ENCODE measurements at regions of chr11 and their contacts with region 1.

Region 1: DNA sequence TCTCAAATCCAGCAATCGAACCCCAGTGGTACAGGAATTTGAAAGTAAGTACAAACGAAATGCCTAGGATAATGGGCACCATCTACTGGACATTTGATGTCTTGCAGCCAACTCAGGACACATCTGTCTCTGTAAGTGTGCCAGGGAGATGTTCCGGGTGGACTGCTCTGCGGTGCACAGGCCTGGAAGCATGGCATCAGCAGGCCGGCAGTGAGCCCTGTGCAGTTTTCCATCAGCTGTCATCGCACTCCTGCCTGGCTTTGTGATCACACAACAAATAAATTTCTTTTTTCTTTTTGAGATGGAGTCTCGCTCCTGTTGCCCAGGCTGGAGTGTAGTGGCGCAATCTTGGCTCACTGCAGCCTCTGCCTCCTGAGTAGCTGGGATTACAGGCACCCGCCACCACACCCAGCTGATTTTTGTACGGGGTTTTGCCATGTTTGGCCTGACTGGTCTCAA is 71.0 kb downstream of the JAM3 start:
- DNase-seq: peak; percentile 64 to 74 (median 66)
- ATAC-seq: peak; percentile 78
- H3K4me3 ChIP-seq: no peak overlapping the region
- H3K27ac ChIP-seq: no peak overlapping the region
- H3K4me1 ChIP-seq: no peaks in the 10 kb centered on the region
- H3K27me3 ChIP-seq: no peaks in the 10 kb centered on the region
- CTCF ChIP-seq: peak; percentile 68 to 88 (median 80)
- POLR2A ChIP-seq: no peak

Region 2: DNA sequence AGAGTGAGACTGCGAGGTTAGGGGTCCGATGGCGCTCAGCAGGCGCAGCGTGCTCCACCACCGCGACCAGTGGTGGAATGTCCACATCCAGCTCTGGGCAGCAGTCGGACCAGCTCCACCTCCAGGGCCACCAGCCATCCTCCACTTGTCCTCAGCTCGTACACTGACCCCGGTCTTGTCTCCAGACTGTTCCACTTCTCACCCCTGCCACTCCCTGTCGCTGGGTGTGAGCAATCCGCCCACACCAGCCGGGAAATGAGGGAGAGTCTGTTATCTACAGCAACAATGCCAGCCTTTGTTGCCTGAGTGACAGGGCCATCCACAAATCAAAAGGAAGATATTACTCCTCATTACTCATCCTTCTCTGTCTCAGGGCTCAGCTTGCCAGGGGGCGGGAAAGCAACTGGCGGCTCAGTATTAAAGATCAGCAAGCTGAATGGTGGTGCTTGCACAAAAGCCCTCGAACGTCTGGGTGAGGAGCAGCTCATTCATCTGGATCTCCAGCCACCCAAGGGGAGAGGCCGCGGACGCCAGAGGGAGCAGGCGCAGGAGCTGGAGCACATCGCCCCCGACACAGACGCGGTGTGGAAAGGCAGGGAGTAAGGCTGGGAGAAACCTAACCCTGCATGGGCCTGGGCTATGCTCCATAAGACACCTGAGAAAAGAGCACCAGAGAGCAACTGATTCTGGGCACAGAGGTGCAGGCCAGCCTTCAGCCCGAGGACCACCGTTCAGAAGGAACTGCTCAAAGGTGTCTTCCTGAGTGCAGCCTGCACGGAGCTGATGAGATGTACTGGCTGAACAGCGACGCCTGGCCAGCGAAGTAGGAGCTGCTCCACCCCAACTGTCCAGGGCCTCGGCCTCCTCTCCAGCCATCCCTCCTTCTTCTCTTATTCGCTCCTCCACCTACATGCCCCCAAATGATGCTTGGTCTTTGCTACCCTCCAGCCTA is 205.0 kb before region 1 on chr11:
- intact Hi-C with region 1: loop called (anchors 5 kb)
- DNase-seq: no peak
- ATAC-seq: no peak
- H3K4me3 ChIP-seq: no peak overlapping the region
- H3K27ac ChIP-seq: no peak overlapping the region
- H3K4me1 ChIP-seq: no peaks in the 10 kb centered on the region
- H3K27me3 ChIP-seq: no peaks in the 10 kb centered on the region
- CTCF ChIP-seq: no peak
- POLR2A ChIP-seq: no peak

Region 3: DNA sequence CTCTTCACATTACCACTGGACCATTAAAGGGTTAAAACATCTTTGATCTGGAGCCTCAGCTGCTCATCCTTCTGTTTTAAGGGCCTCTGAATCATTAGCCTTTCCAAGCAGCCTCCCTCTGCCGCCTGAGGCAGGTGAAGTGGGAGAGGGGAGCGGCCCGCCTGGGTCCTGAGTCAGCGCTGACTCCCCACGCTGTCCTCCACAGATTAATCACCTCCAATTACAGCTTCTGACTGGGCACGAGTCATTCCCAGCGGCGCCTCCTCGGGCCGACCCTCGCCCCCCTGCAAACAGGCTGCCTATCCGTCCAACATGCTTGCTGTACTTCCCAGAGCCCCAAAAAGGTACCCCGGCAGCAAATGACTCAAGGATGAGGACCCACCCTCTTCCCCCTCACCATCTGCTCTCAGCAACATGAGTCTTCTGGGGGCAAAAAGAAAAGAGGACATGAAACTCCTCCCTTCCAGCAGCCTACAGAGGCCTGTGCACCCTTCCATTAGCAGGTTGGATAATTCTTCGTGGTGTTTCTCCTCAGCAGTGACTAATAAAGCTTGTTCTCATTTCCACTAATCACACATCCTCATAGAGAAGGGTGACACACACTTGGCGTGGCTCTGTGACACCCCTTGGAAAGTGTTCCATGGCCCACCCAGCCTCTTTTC is 115.4 kb before region 1 on chr11:
- intact Hi-C with region 1: no loop called
- DNase-seq: no peak
- ATAC-seq: no peak
- H3K4me3 ChIP-seq: no peak overlapping the region
- H3K27ac ChIP-seq: no peak overlapping the region
- H3K4me1 ChIP-seq: no peaks in the 10 kb centered on the region
- H3K27me3 ChIP-seq: no peaks in the 10 kb centered on the region
- CTCF ChIP-seq: no peak
- POLR2A ChIP-seq: no peak

Region 4: DNA sequence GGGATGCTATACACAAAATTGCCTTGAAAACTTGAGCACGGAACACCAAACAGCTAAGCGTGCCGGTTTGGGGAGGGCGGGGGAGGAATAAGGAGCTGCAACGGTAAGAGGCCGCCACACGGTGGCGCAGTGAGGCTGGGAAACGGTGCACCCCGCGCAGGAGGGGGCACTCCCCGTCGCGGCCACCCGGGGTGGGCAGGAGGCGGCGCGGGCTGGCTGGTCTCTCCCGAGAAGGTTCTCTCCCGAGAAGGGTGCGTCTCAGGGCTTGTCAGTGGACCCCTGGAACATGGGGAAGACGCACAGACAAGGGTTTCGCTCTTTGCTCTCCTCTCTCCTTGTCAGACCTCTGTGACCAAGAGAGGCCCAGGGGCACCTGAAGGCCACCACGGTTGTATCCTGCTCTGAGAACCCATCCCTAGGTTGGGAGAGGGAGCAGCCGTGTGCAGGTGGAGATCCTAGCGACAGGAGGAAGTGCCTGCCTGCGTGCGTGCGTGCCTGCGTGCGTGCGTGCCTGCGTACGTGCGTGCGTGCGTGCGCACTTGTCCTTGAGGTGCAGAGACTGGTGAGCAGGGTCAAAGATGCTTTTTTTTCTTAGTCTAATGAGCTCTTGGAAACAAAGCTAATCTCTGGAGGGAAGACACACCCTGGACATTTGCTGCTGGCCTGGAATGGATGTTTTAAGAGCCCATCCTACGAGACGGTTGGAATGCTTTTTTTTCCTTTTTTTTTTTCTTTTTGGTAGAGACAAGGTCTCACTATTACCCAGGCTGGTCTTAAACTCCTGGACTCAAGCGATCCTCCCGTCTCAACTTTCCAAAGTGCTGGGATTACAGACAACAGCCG is 89.1 kb before region 1 on chr11:
- intact Hi-C with region 1: loop called (anchors 10 kb)
- DNase-seq: peak; percentile 77 to 86 (median 82)
- ATAC-seq: peak; percentile 92
- H3K4me3 ChIP-seq: no peak overlapping the region
- H3K27ac ChIP-seq: peak overlapping the region; percentile 51 to 89 (median 82)
- H3K4me1 ChIP-seq: peaks cover 9% of the 10 kb centered on the region
- H3K27me3 ChIP-seq: peaks cover 0 to 11% of the 10 kb centered on the region in 2 donors
- CTCF ChIP-seq: peak; percentile 69 to 94 (median 93)
- POLR2A ChIP-seq: peak in 2 of 3 donors; percentile 53 to 61